ENCODE measurements at regions of chr11 and their contacts with region 1.

Region 1: DNA sequence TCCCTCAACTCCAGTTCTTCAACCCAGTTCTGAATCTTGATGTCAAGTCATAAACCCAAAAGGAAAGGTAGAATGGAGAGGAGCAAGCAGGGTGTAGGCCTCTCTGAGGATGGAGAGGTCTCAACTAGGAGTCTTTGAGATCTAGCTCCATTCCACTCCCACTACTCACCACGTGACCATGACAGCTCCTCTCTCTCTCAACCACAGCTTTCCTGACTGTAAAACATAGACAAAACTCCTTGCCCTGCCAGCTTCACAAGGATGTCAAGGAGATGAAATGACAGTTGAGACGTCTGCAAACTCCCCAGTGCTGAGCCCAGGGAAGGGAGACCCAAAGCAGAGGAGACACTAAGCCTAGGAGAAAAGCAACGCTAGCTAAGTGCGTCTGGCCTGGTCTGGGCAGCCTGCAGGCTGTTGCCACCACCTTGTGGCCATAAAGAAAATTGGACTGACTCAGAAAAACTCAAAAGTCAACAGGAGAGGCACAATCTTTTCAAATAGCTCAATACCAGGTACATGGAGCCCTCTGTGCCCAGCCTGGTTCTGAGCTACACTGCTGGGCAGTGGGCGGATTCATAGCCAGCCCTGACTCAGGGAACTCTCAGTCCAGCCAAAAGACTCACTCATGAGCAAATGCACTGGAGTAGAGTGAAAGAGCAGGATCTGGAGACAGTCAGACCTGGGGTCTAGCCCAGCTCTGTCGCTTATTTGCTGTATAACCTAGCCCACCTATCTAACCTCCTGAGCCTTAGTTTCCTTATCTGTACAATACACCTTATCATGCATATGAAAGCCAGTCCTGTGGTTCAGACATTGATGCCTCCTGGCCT is 3.4 kb downstream of the CLPB start:
- DNase-seq: peak; percentile 42
- H3K27ac ChIP-seq: no peak overlapping the region
- CTCF ChIP-seq: peak; percentile 79

Region 2: GRCh38 chr11:72413914-72414628 is 16.9 kb before region 1 on chr11:
- CTCF ChIA-PET with region 1: interaction called, 20 read pairs
- POLR2A ChIA-PET with region 1: no interaction called
- DNase-seq: peak; percentile 76
- H3K27ac ChIP-seq: no peak overlapping the region
- CTCF ChIP-seq: peak; percentile 90

Region 3: GRCh38 chr11:72446902-72447769 is 16.2 kb after region 1 on chr11:
- CTCF ChIA-PET with region 1: interaction called, 12 read pairs
- POLR2A ChIA-PET with region 1: no interaction called
- DNase-seq: peak; percentile 79
- H3K27ac ChIP-seq: no peak overlapping the region
- CTCF ChIP-seq: peak; percentile 86

Measured in RWPE1 (cell line).